ENCODE measurements at regions of chr6 and their contacts with region 1.

Region 1: DNA sequence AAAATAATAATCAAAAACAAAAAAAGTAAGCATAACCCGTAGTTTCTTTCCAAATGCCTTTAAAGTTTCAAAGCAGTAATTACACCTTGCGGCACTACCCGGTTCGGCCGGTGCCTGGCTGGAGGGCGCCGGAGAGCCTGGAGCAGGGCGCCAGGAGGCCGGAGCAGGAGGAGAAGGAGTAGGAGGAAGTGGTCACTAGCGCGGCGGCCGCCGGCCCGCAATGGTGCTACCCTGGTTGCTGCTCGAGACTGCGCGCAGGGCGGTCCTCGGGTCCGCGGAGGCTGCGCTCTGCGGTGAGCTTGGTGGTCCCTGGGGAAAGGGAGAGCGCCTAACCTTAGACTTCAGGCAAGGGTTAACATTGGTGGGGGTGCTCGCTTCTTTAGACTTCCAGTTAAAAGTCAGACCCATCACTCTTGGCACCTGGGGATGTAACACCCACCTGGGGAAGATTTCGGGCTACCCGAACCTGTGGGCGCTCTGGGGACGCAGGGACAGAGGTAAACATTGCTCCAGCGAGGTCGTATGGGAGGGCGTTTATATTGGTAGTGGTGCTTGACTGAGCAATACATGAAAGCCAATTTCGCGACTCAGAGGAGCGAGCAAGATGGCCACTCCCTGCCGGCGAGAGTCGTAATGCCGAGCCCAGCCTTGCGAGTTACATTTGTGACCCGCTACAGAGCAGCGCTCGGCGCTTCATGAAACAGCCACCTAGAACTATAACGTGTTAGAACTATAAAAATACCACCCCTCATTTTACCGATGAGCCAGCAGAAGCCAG is 5.8 kb upstream of the USP45 start:
- DNase-seq: peak; percentile 94

Region 2: GRCh38 chr6:99138445-99138844 is 382.6 kb before region 1 on chr6:
- intact Hi-C with region 1: no loop called
- DNase-seq: no peak

Region 3: DNA sequence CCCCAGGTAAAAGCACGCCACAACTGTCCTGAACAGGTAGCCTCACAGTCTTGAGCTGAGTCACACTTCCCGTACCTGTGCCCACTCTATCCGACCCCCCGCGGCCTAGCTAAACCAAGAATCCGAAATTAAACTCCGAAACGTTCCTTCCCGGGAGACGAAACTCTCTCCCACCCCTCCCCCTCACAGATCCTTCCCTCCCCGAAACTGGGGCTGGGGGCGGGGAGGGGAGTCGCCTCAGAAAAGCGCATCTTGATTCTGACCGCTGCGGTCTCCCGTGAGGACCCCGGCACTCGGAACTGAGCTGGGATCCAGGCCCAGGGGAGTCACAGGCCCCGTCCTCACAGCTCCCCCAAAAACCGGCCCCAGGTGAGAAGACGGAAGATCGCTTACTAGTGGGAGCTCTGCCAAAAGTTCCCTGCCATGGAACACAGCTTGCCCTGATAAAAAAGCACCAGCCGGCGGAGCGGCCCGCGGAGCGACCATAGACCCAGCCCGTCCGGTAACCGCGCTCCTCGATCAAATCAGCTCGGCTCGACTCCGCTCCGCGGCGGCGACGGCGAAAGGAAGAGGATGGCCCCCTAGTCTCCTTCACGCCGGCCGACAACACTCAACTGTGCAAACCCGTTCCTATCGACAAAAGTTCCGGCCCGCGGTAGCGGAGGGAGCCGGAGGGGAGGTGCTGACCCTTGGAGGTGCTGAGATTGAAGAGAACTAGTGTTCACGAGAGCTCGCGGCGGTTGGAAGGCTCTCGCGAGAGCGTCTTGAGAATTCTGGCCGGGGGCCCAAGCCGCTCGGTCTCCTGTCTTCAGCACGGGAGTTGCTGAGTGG is 47.3 kb after region 1 on chr6 and contains the start of gene CCNC:
- intact Hi-C with region 1: loop called (anchors 1 kb)
- DNase-seq: peak; percentile 94
- total RNA-seq, gene CCNC: 26.5 TPM

Region 4: GRCh38 chr6:100185615-100186014 is 664.6 kb after region 1 on chr6:
- intact Hi-C with region 1: no loop called
- DNase-seq: no peak